ENCODE measurements at regions of chr9 and their contacts with region 1.

Region 1: GRCh38 chr9:128339771-128340690 is at the start of gene SLC27A4:
- DNase-seq: peak; percentile 81 to 93
- ATAC-seq: peak; percentile 86 to 89
- H3K4me3 ChIP-seq: peak within 1 kb of the TSS; percentile 90
- H3K27ac ChIP-seq: peak within 1 kb of the TSS; percentile 89 to 92
- H3K4me1 ChIP-seq: 0 out of 3 replicates have a peak, but pooled peaks cover 4% of the 10 kb centered on the region
- CTCF ChIP-seq: no peak
- EP300 ChIP-seq: no peak
- POLR2A ChIP-seq: peak; percentile 57
- RAD21 ChIP-seq: no peak
- polyA plus RNA-seq, gene SLC27A4: 14.5 and 14.9 TPM in 2 replicates

Region 2: GRCh38 chr9:128286440-128286839 is 53.6 kb before region 1 on chr9:
- CTCF ChIA-PET with region 1: interaction called, 206 read pairs
- POLR2A ChIA-PET with region 1: no interaction called
- DNase-seq: no peak
- ATAC-seq: no peak
- H3K4me3 ChIP-seq: no peak overlapping the region
- H3K27ac ChIP-seq: no peak overlapping the region
- H3K4me1 ChIP-seq: no peaks in the 10 kb centered on the region
- CTCF ChIP-seq: no peak
- EP300 ChIP-seq: no peak
- POLR2A ChIP-seq: no peak
- RAD21 ChIP-seq: no peak

Region 3: GRCh38 chr9:128304149-128304974 is 35.7 kb before region 1 on chr9:
- CTCF ChIA-PET with region 1: interaction called, 206 read pairs
- POLR2A ChIA-PET with region 1: interaction called, 8 read pairs
- DNase-seq: no peak
- ATAC-seq: peak; percentile 6 to 21; a peak in 3 of 6 replicates
- H3K4me3 ChIP-seq: no peak overlapping the region
- H3K27ac ChIP-seq: peak overlapping the region in 1 of 2 experiments; percentile 93; a peak in 4 of 6 replicates
- H3K4me1 ChIP-seq: peaks cover 41% of the 10 kb centered on the region
- CTCF ChIP-seq: no peak
- EP300 ChIP-seq: no peak
- POLR2A ChIP-seq: no peak
- RAD21 ChIP-seq: no peak

Region 4: DNA sequence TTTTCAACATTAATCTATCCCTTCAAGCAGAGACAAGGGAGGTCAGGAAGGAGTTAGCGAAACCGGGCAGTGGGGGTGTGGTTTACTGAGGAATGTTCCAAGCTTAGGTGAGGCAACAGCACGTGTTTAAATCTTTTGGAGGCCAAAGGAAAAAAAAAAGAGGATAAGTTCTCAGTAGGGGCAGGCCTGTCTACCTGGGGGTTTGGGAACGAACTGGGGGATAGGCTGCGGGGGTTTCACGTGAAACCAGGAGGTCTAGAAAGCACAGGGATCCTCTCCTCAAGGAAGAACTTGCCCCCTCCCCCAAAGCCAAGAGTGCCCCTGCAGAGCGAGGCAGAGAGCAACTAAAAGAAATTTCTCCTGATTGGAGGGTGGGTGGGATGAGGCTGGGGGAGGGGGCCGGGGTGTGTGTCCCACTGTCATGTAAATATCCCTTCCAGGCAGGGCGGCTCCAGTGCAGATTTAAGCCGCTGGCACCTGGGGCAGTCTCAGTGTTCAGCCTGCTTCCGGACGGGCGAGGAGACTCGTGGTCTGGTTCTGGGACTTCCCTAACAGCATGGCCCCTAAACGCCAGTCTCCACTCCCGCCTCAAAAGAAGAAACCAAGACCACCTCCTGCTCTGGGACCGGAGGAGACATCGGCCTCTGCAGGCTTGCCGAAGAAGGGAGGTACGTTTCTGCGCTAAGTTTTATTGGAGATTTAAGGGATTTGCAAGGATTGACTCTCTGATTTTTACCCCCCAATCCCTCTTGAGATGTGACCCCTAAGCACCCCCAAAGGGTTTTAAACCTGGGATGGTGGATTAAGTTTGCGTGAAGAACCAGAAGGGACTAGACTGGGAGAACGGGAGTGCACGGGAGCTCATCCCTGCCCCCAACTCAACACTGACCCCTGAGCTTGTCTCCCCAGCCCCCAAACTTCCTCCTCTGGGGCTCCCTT is 343.6 kb after region 1 on chr9:
- CTCF ChIA-PET with region 1: no interaction called
- POLR2A ChIA-PET with region 1: no interaction called
- DNase-seq: peak; percentile 55 to 56
- ATAC-seq: peak; percentile 55 to 67; a peak in 5 of 6 replicates
- H3K4me3 ChIP-seq: peak overlapping the region; percentile 69
- H3K27ac ChIP-seq: peak overlapping the region; percentile 97 to 98
- H3K4me1 ChIP-seq: peaks cover 34% of the 10 kb centered on the region
- CTCF ChIP-seq: no peak
- EP300 ChIP-seq: no peak
- POLR2A ChIP-seq: peak; percentile 54
- RAD21 ChIP-seq: no peak

Measured in A549 (cell line).